ENCODE measurements at regions of chr19 and their contacts with region 1.

Region 1: DNA sequence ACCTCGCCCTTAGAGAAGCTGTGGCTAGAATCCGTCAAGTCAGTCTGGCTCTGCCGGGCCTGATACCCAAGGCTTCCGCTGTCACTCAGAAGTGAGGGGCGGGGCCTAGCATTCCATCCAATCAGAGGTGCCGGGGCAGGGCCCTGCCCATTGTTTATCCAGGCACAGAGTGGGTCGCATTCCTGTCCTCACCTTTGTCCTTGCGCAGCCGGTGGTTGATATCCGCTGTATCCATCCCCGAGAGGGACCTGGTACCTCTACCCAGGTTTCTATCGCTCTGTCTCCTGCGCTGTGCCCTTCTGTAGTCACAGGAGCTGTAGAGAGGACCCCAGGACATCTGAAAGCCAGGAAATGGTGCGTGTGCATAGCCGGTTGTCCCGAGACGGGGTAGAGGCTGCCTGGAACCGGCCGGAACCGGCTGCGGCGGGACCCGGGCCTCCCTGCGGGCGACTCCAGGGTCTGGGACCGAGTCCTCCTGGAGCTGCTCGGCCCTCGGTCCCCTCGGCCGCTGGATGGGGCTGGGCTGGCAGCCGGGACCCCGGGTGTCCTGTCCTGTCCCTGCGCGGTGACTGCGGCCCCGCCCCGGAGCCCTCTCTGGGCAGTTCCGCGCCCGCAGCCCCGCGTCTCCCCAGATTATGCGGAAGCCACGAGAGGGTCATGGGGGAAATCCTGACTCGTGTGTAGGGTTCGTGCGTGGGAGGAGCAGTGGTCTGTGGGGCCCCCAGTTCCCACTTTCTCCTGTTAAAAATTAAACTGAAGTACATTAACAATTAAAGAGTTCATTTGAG is at the start of gene ZNF763:
- DNase-seq: peak; percentile 94 to 97 (median 95)
- ATAC-seq: peak; percentile 99
- H3K4me3 ChIP-seq: peak within 1 kb of the TSS; percentile 59 to 94 (median 78)
- H3K27ac ChIP-seq: peak within 1 kb of the TSS; percentile 73 to 99 (median 92)
- H3K4me1 ChIP-seq: peaks cover 0 to 22% (median 13%) of the 10 kb centered on the region in 12 donors
- H3K27me3 ChIP-seq: no peaks in the 10 kb centered on the region
- CTCF ChIP-seq: peak in 1 of 12 donors; percentile 0
- POLR2A ChIP-seq: peak in 1 of 2 donors; percentile 83
- total RNA-seq, gene ZNF763: 1.3 to 6.2 (median 5.0) TPM

Region 2: GRCh38 chr19:11887611-11888531 is 77.2 kb before region 1 on chr19 and contains the start of gene ZNF69:
- intact Hi-C with region 1: loop called in 1 of 10 experiments (anchors 2 kb)
- DNase-seq: peak; percentile 88 to 94 (median 89)
- ATAC-seq: peak; percentile 95 to 100 (median 99)
- H3K4me3 ChIP-seq: peak within 1 kb of the TSS; percentile 66 to 85 (median 70)
- H3K27ac ChIP-seq: peak within 1 kb of the TSS; percentile 10 to 90 (median 84)
- H3K4me1 ChIP-seq: peaks cover 0 to 15% (median 9%) of the 10 kb centered on the region in 12 donors
- H3K27me3 ChIP-seq: no peaks in the 10 kb centered on the region
- CTCF ChIP-seq: peak in 4 of 12 donors; percentile 23 to 51 (median 33)
- POLR2A ChIP-seq: peak in 1 of 2 donors; percentile 44
- total RNA-seq, gene ZNF69: 2.8 to 5.4 (median 4.2) TPM

Region 3: GRCh38 chr19:12052497-12053169 is 87.6 kb after region 1 on chr19 and contains the start of gene ZNF878:
- intact Hi-C with region 1: loop called in 1 of 10 experiments (anchors 5 kb)
- DNase-seq: peak; percentile 90 to 95 (median 92)
- ATAC-seq: peak; percentile 100
- H3K4me3 ChIP-seq: peak within 1 kb of the TSS; percentile 59 to 85 (median 68)
- H3K27ac ChIP-seq: peak within 1 kb of the TSS in 11 of 12 donors; percentile 20 to 79 (median 66)
- H3K4me1 ChIP-seq: peaks cover 0 to 18% (median 2%) of the 10 kb centered on the region in 12 donors
- H3K27me3 ChIP-seq: no peaks in the 10 kb centered on the region
- CTCF ChIP-seq: peak in 5 of 12 donors; percentile 7 to 32 (median 26)
- POLR2A ChIP-seq: peak; percentile 71 to 94
- total RNA-seq, gene ZNF878: 0.16 to 0.24 (median 0.22) TPM in 4 of 9 donors, not detected in the others